Heart left ventricle (tissue), 16 donors: ENCODE measurements at regions of chr11 and their contacts with region 1.

Region 1: GRCh38 chr11:207208-207862 is at the starts of genes BET1L and RIC8A:
- DNase-seq: peak; percentile 95 to 98 (median 97)
- ATAC-seq: peak; percentile 90 to 95 (median 94)
- H3K4me3 ChIP-seq: peak within 1 kb of the TSS; percentile 65 to 100 (median 89)
- H3K27ac ChIP-seq: peak within 1 kb of the TSS; percentile 96 to 100 (median 99)
- H3K4me1 ChIP-seq: peaks cover 19 to 59% (median 38%) of the 10 kb centered on the region in 12 donors
- H3K27me3 ChIP-seq: no peaks in the 10 kb centered on the region
- CTCF ChIP-seq: peak in 2 of 12 donors; percentile 14 to 16
- POLR2A ChIP-seq: peak; percentile 47 to 91
- total RNA-seq, gene BET1L: 16.4 to 32.2 (median 20.9) TPM
- total RNA-seq, gene RIC8A: 48.7 to 94.1 (median 74.3) TPM

Region 2: DNA sequence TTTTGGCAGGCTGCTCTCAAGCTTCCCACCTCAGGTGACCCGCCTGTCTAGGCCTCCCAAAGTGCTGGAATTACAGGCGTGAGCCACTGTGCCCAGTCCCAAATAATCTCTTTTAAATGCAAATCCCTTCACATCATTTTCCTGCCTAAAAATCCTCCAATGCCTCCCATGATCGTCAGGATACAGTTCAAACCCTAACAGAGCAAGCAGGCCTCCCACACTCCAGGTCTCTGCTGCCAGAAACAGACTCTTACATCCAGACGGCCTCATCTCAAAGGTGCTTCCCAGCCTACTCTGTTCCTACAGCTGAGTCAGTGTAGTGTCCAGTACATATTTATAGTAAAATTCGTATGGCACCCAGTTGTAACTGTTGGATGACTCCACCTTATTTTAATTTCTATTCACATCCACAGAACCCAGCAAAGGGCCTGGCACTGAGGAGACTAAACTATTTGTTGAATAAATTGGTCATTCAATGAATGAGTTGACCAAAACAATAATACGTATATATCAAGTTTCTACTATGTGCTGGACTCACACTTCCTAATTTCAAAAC is 20.6 kb after region 1 on chr11:
- intact Hi-C with region 1: no loop called
- DNase-seq: no peak
- ATAC-seq: no peak
- H3K4me3 ChIP-seq: no peak overlapping the region
- H3K27ac ChIP-seq: no peak overlapping the region
- H3K4me1 ChIP-seq: peaks cover 0 to 8% (median 0%) of the 10 kb centered on the region in 12 donors
- H3K27me3 ChIP-seq: no peaks in the 10 kb centered on the region
- CTCF ChIP-seq: no peak
- POLR2A ChIP-seq: no peak

Region 3: GRCh38 chr11:299951-300735 is 92.8 kb after region 1 on chr11:
- intact Hi-C with region 1: loop called in 3 of 10 experiments (anchors 5 to 10 kb)
- DNase-seq: peak in 3 of 5 donors; percentile 26 to 48 (median 37)
- ATAC-seq: no peak
- H3K4me3 ChIP-seq: no peak overlapping the region
- H3K27ac ChIP-seq: no peak overlapping the region
- H3K4me1 ChIP-seq: peaks cover 0 to 19% (median 3%) of the 10 kb centered on the region in 12 donors
- H3K27me3 ChIP-seq: peaks cover 4 to 47% (median 17%) of the 10 kb centered on the region in 9 donors
- CTCF ChIP-seq: peak in 2 of 12 donors; percentile 14 to 19
- POLR2A ChIP-seq: no peak

Region 4: DNA sequence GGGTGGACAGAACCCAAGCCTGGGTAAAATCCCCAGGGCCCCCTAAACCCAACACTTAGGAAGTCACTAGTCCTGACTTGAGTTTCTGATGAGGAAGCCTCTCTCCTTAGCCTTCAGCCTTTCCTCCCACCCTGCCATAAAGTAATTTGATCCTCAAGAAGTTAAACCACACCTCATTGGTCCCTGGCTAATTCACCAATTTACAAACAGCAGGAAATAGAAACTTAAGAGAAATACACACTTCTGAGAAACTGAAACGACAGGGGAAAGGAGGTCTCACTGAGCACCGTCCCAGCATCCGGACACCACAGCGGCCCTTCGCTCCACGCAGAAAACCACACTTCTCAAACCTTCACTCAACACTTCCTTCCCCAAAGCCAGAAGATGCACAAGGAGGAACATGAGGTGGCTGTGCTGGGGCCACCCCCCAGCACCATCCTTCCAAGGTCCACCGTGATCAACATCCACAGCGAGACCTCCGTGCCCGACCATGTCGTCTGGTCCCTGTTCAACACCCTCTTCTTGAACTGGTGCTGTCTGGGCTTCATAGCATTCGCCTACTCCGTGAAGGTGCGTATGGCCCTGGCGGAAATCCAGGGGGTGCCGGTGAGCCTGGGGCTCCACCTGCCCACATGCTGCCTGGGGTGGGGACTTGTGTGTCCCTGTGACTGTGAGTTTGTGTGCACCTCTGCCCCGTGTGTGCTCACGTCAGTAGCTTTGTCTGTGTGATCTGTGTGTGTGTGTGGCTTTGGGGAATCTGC is 106.6 kb after region 1 on chr11 and contains the start of gene IFITM1:
- intact Hi-C with region 1: loop called in 3 of 10 experiments (anchors 2 to 5 kb)
- DNase-seq: peak in 3 of 5 donors; percentile 60 to 68 (median 65)
- ATAC-seq: peak; percentile 18 to 59 (median 34)
- H3K4me3 ChIP-seq: peak within 1 kb of the TSS; percentile 28 to 89 (median 72)
- H3K27ac ChIP-seq: peak within 1 kb of the TSS; percentile 85 to 98 (median 92)
- H3K4me1 ChIP-seq: peaks cover 4 to 55% (median 25%) of the 10 kb centered on the region in 12 donors
- H3K27me3 ChIP-seq: peaks cover 0 to 22% (median 7%) of the 10 kb centered on the region in 9 donors
- CTCF ChIP-seq: no peak
- POLR2A ChIP-seq: peak in 1 of 2 donors; percentile 80
- total RNA-seq, gene IFITM1: 61.3 to 277 (median 127) TPM

Region 5: GRCh38 chr11:363948-364761 is 156.8 kb after region 1 on chr11:
- intact Hi-C with region 1: loop called in 5 of 10 experiments (anchors 5 to 10 kb)
- DNase-seq: no peak
- ATAC-seq: peak in 3 of 4 donors; percentile 23 to 46 (median 24)
- H3K4me3 ChIP-seq: no peak overlapping the region
- H3K27ac ChIP-seq: no peak overlapping the region
- H3K4me1 ChIP-seq: peaks cover 0 to 11% (median 6%) of the 10 kb centered on the region in 12 donors
- H3K27me3 ChIP-seq: peaks cover 11 to 62% (median 42%) of the 10 kb centered on the region in 9 donors
- CTCF ChIP-seq: peak in 1 of 12 donors; percentile 19
- POLR2A ChIP-seq: no peak

Region 6: DNA sequence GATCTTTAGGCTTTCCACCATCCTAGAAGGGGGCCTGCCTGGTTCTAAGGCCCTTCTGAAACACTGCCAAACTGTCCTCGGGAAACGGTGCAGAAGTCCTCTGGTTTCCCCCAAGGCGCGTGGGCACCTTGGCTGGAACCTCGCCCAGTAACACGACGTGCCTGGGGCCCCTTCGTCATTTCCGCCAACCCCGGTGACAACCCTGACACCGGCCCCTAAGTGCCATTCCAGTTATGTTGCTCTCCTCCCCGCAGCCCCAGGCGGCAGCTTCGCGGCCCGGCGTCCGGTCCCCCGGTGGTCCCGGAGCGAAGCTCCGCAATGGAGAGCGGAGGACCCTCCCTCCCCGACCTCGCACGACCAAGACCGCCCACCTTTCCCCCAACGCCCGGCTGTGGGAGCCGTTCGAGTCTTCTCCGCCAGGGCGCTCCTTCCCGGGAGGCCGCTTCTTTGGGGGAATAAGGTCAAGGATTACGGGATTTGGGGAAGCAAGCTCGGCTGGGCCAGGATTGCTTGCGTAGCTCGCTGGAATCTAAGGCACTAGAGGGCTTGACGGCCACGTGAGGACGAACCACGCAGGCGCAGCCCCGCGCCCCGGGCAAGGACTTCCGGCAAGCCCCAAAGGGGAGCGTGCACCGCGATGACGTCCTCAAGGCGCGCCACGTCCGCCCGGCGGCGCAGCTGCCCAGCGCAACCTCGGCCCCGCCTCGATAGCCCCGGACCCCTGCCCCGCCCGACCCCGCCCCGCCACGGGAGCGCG is 299.1 kb after region 1 on chr11:
- intact Hi-C with region 1: loop called in 4 of 10 experiments (anchors 5 to 10 kb)
- DNase-seq: peak; percentile 98 to 99 (median 99)
- ATAC-seq: peak; percentile 79 to 87 (median 84)
- H3K4me3 ChIP-seq: peak overlapping the region; percentile 52 to 98 (median 82)
- H3K27ac ChIP-seq: peak overlapping the region; percentile 95 to 100 (median 99)
- H3K4me1 ChIP-seq: peaks cover 8 to 59% (median 49%) of the 10 kb centered on the region in 12 donors
- H3K27me3 ChIP-seq: no peaks in the 10 kb centered on the region
- CTCF ChIP-seq: no peak
- POLR2A ChIP-seq: peak in 1 of 2 donors; percentile 69